Heart right ventricle (tissue), 16 donors: ENCODE measurements at regions of chr21 and their contacts with region 1.

Region 1: GRCh38 chr21:27371115-27371974 is 404.5 kb upstream of the ADAMTS5 start:
- DNase-seq: peak in 1 of 2 donors; percentile 13
- ATAC-seq: peak in 5 of 8 donors; percentile 42 to 80 (median 66)
- H3K4me3 ChIP-seq: no peak overlapping the region
- H3K27ac ChIP-seq: peak overlapping the region in 3 of 10 donors; percentile 25 to 33 (median 27)
- H3K4me1 ChIP-seq: peaks cover 2 to 36% (median 31%) of the 10 kb centered on the region in 9 donors
- H3K27me3 ChIP-seq: no peaks in the 10 kb centered on the region
- CTCF ChIP-seq: no peak

Region 2: GRCh38 chr21:27450216-27450615 is 78.9 kb after region 1 on chr21:
- intact Hi-C with region 1: loop called in 1 of 10 experiments (anchors 10 kb)
- DNase-seq: no peak
- ATAC-seq: no peak
- H3K4me3 ChIP-seq: no peak overlapping the region
- H3K27ac ChIP-seq: peak overlapping the region in 3 of 10 donors; percentile 2 to 36 (median 31)
- H3K4me1 ChIP-seq: peaks cover 0 to 17% (median 7%) of the 10 kb centered on the region in 9 donors
- H3K27me3 ChIP-seq: no peaks in the 10 kb centered on the region
- CTCF ChIP-seq: no peak